ENCODE measurements at regions of chr4 and their contacts with region 1.

Region 1: GRCh38 chr4:54384563-54384962 is 155.5 kb downstream of the PDGFRA start:
- DNase-seq: peak; percentile 38
- H3K4me3 ChIP-seq: no peak overlapping the region
- H3K27ac ChIP-seq: no peak overlapping the region
- H3K4me1 ChIP-seq: no peaks in the 10 kb centered on the region
- H3K27me3 ChIP-seq: no peaks in the 10 kb centered on the region
- CTCF ChIP-seq: peak; percentile 26

Region 2: GRCh38 chr4:54840992-54841768 is 456.6 kb after region 1 on chr4:
- intact Hi-C with region 1: loop called (anchors 10 kb)
- DNase-seq: peak; percentile 18
- H3K4me3 ChIP-seq: no peak overlapping the region
- H3K27ac ChIP-seq: no peak overlapping the region
- H3K4me1 ChIP-seq: no peaks in the 10 kb centered on the region
- H3K27me3 ChIP-seq: no peaks in the 10 kb centered on the region
- CTCF ChIP-seq: no peak

Measured in colonic mucosa (tissue), 4 donors.